CD14-positive monocyte (primary cell): ENCODE measurements at regions of chr7 and their contacts with region 1.

Region 1: GRCh38 chr7:112080441-112080840 is 125.8 kb downstream of the DOCK4 start:
- DNase-seq: peak; percentile 96 to 99 (median 99)
- H3K4me3 ChIP-seq: peak overlapping the region; percentile 16 to 33 (median 32)
- H3K4me3 Mint-ChIP-seq: peak overlapping the region; percentile 60 to 85
- H3K27ac ChIP-seq: peak overlapping the region; percentile 92 to 99
- H3K27ac Mint-ChIP-seq: peak overlapping the region; percentile 99 to 100 (median 100)
- H3K4me1 ChIP-seq: peaks cover 41 to 52% of the 10 kb centered on the region in 2 donors
- H3K4me1 Mint-ChIP-seq: peaks cover 42% of the 10 kb centered on the region
- H3K27me3 ChIP-seq: no peaks in the 10 kb centered on the region
- H3K27me3 Mint-ChIP-seq: peaks cover 0 to 4% (median 0%) of the 10 kb centered on the region in 3 donors
- CTCF ChIP-seq: no peak

Region 2: DNA sequence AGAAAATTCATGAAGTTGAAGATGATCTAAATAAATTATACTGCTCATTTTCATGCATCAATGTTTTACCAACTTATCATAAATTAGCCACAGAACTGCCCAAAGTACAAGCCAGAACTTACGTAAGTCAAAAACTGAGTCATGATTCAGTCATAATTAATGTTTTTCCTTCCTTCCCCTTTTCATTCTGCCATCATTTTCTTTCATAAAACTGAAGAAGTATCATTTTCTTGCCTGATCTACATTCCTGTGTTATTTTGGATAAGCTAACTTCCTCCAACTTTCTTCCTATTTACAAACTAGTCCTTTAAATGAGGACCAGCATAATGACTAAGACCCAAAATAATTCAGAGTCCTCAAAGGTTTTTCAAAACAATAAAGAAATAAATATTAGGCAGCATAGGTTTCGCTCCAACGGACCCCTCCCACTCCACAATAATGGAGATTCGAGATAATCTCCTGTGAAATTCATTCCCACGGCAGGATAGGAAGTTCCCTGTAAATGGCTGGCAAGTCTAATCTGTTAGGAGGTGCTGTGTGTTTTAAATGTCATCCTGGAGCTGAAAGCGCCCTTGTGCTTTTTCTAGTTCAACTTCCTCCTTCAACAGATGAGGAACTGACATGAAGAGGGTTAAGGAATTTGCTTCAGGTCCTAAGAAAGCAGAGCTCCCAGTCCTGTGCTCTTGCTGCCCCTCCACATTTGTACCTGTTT is 93.2 kb before region 1 on chr7:
- intact Hi-C with region 1: loop called (anchors 2 to 10 kb)
- DNase-seq: peak; percentile 76 to 92 (median 88)
- H3K4me3 ChIP-seq: peak overlapping the region in 2 of 3 experiments; percentile 37 to 62
- H3K4me3 Mint-ChIP-seq: peak overlapping the region; percentile 53 to 71
- H3K27ac ChIP-seq: peak overlapping the region; percentile 59 to 94
- H3K27ac Mint-ChIP-seq: peak overlapping the region; percentile 97 to 99 (median 98)
- H3K4me1 ChIP-seq: peaks cover 24 to 28% of the 10 kb centered on the region in 2 donors
- H3K4me1 Mint-ChIP-seq: peaks cover 30% of the 10 kb centered on the region
- H3K27me3 ChIP-seq: no peaks in the 10 kb centered on the region
- H3K27me3 Mint-ChIP-seq: peaks cover 0 to 8% (median 5%) of the 10 kb centered on the region in 3 donors
- CTCF ChIP-seq: no peak

Region 3: GRCh38 chr7:112449902-112450806 is 369.7 kb after region 1 on chr7 and contains the start of gene IFRD1:
- intact Hi-C with region 1: loop called (anchors 5 kb)
- DNase-seq: peak; percentile 96 to 98 (median 97)
- H3K4me3 ChIP-seq: peak within 1 kb of the TSS; percentile 75 to 100 (median 100)
- H3K4me3 Mint-ChIP-seq: peak within 1 kb of the TSS; percentile 96 to 98
- H3K27ac ChIP-seq: peak within 1 kb of the TSS; percentile 97
- H3K27ac Mint-ChIP-seq: peak within 1 kb of the TSS; percentile 97 to 99 (median 98)
- H3K4me1 ChIP-seq: peaks cover 23 to 40% of the 10 kb centered on the region in 2 donors
- H3K4me1 Mint-ChIP-seq: peaks cover 41% of the 10 kb centered on the region
- H3K27me3 ChIP-seq: no peaks in the 10 kb centered on the region
- H3K27me3 Mint-ChIP-seq: peaks cover 0 to 8% (median 0%) of the 10 kb centered on the region in 3 donors
- CTCF ChIP-seq: no peak
- polyA plus RNA-seq, gene IFRD1: 13.6 to 81.6 (median 18.7) TPM